Naive thymus-derived CD4-positive, alpha-beta T cell (primary cell): ENCODE measurements at regions of chr19 and their contacts with region 1.

Region 1: DNA sequence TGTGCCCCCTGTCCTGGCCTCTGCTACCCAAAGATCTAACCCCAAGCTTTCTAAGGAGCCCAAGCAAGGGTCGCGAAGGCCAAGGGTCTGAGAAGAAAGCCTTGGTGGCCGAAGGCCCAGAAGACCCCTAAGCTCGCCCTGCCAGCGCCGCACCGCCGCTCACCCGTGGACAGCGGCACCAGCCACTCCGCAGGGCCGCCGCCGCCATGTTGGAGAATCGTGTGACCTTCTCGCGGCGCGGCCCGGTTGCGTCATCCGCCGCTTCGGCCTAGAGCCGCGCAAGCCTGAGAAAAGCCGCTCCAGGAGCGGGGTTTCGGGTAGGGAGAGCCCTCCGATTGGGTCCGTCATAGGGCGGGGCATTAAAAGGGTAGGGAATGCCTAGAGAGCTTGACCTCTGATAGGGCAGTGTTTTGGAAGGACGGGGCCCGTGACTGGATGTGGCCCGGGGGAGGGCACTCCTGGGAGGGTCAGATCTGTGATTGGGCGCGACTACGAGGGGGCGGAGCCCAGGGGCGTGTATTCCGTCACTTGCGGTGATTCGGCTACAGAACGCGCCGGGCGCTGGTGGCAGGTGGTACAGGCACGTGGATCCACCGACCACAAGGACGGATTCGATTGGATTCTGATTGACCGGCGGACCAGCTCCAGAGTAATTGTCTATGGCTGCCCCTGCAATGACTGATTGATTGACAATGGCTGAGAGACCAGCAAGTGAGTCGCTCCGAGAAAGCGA is at the start of gene TIMM44:
- DNase-seq: peak; percentile 91 to 99 (median 98)
- ATAC-seq: peak; percentile 98
- H3K4me3 ChIP-seq: peak within 1 kb of the TSS; percentile 92
- H3K4me3 Mint-ChIP-seq: peak within 1 kb of the TSS; percentile 83 to 99 (median 94)
- H3K27ac ChIP-seq: peak within 1 kb of the TSS; percentile 96
- H3K27ac Mint-ChIP-seq: peak within 1 kb of the TSS; percentile 78 to 98 (median 96)
- H3K4me1 ChIP-seq: peaks cover 7 to 9% of the 10 kb centered on the region in 2 donors
- H3K4me1 Mint-ChIP-seq: peaks cover 10 to 44% (median 28%) of the 10 kb centered on the region in 7 donors
- H3K27me3 ChIP-seq: no peaks in the 10 kb centered on the region
- H3K27me3 Mint-ChIP-seq: no peaks in the 10 kb centered on the region
- total RNA-seq, gene TIMM44: 65.3 to 97.6 (median 73.8) TPM

Region 2: GRCh38 chr19:7629347-7630054 is 314.1 kb before region 1 on chr19 and contains the starts of genes PET100 and XAB2:
- CTCF ChIA-PET with region 1: no interaction called
- POLR2A ChIA-PET with region 1: interaction called, 6 read pairs
- intact Hi-C with region 1: loop called in 1 of 2 experiments (anchors 1 kb)
- DNase-seq: peak; percentile 81 to 97 (median 95)
- ATAC-seq: peak; percentile 97
- H3K4me3 ChIP-seq: peak within 1 kb of the TSS; percentile 89
- H3K4me3 Mint-ChIP-seq: peak within 1 kb of the TSS; percentile 87 to 100 (median 98)
- H3K27ac ChIP-seq: peak within 1 kb of the TSS; percentile 92
- H3K27ac Mint-ChIP-seq: peak within 1 kb of the TSS; percentile 96 to 100 (median 99)
- H3K4me1 ChIP-seq: peaks cover 19 to 21% of the 10 kb centered on the region in 2 donors
- H3K4me1 Mint-ChIP-seq: peaks cover 25 to 57% (median 38%) of the 10 kb centered on the region in 7 donors
- H3K27me3 ChIP-seq: no peaks in the 10 kb centered on the region
- H3K27me3 Mint-ChIP-seq: no peaks in the 10 kb centered on the region
- total RNA-seq, gene PET100: 112 to 134 (median 117) TPM
- total RNA-seq, gene XAB2: 49.3 to 79.8 (median 76.4) TPM

Region 3: DNA sequence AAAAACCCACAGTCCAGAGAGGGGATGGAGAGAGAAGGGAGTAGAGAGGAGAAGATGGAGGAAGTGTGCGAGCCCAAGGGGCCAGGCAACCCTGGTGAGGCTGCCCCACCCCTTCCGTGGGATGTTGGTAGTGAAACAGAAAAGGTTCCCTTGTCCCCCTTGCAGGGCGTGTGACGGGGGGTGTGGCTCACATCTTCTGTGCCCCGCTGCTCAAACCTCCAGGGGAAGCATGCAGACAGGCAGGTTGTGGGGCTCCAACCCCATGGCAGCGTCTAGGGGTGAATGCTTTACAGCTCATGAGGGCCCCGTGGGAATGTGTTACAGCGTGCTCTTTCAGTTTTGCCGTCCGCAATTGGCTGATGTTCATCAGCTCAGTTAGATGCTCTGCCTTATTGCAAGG is 128.3 kb before region 1 on chr19:
- CTCF ChIA-PET with region 1: no interaction called
- POLR2A ChIA-PET with region 1: no interaction called
- intact Hi-C with region 1: no loop called
- DNase-seq: peak in 4 of 9 donors; percentile 26 to 37 (median 30)
- ATAC-seq: peak; percentile 64
- H3K4me3 ChIP-seq: peak overlapping the region; percentile 24
- H3K4me3 Mint-ChIP-seq: peak overlapping the region; percentile 48 to 84 (median 66)
- H3K27ac ChIP-seq: no peak overlapping the region
- H3K27ac Mint-ChIP-seq: peak overlapping the region in 4 of 9 donors; percentile 49 to 91 (median 76)
- H3K4me1 ChIP-seq: peaks cover 9 to 14% of the 10 kb centered on the region in 2 donors
- H3K4me1 Mint-ChIP-seq: peaks cover 3 to 25% (median 20%) of the 10 kb centered on the region in 7 donors
- H3K27me3 ChIP-seq: no peaks in the 10 kb centered on the region
- H3K27me3 Mint-ChIP-seq: peaks cover 6 to 21% (median 17%) of the 10 kb centered on the region in 5 donors

Region 4: GRCh38 chr19:7852851-7853769 is 90.5 kb before region 1 on chr19:
- CTCF ChIA-PET with region 1: interaction called, 3 read pairs
- POLR2A ChIA-PET with region 1: no interaction called
- intact Hi-C with region 1: loop called in 1 of 2 experiments (anchors 1 kb)
- DNase-seq: peak; percentile 38 to 76 (median 51)
- ATAC-seq: peak; percentile 87
- H3K4me3 ChIP-seq: no peak overlapping the region
- H3K4me3 Mint-ChIP-seq: peak overlapping the region in 1 of 10 donors; percentile 33
- H3K27ac ChIP-seq: no peak overlapping the region
- H3K27ac Mint-ChIP-seq: peak overlapping the region in 1 of 9 donors; percentile 52
- H3K4me1 ChIP-seq: peaks cover 3 to 7% of the 10 kb centered on the region in 2 donors
- H3K4me1 Mint-ChIP-seq: peaks cover 0 to 8% (median 5%) of the 10 kb centered on the region in 7 donors
- H3K27me3 ChIP-seq: no peaks in the 10 kb centered on the region
- H3K27me3 Mint-ChIP-seq: no peaks in the 10 kb centered on the region

Region 5: GRCh38 chr19:7919610-7920518 is 23.7 kb before region 1 on chr19 and contains the start of gene SNAPC2:
- CTCF ChIA-PET with region 1: interaction called, 14 read pairs
- POLR2A ChIA-PET with region 1: interaction called, 38 read pairs
- intact Hi-C with region 1: loop called (anchors 1 kb)
- DNase-seq: peak; percentile 95 to 99 (median 98)
- ATAC-seq: peak; percentile 71
- H3K4me3 ChIP-seq: peak within 1 kb of the TSS; percentile 86
- H3K4me3 Mint-ChIP-seq: peak within 1 kb of the TSS; percentile 88 to 97 (median 94)
- H3K27ac ChIP-seq: peak within 1 kb of the TSS; percentile 75
- H3K27ac Mint-ChIP-seq: peak within 1 kb of the TSS; percentile 76 to 97 (median 92)
- H3K4me1 ChIP-seq: peaks cover 25 to 34% of the 10 kb centered on the region in 2 donors
- H3K4me1 Mint-ChIP-seq: peaks cover 15 to 52% (median 38%) of the 10 kb centered on the region in 7 donors
- H3K27me3 ChIP-seq: peaks cover 3 to 20% of the 10 kb centered on the region in 2 donors
- H3K27me3 Mint-ChIP-seq: peaks cover 12 to 33% (median 14%) of the 10 kb centered on the region in 5 donors
- total RNA-seq, gene SNAPC2: 12.3 to 24.4 (median 21.4) TPM

Region 6: GRCh38 chr19:8158411-8159074 is 214.9 kb after region 1 on chr19:
- CTCF ChIA-PET with region 1: no interaction called
- POLR2A ChIA-PET with region 1: no interaction called
- intact Hi-C with region 1: loop called (anchors 1 kb)
- DNase-seq: peak in 8 of 9 donors; percentile 34 to 70 (median 60)
- ATAC-seq: peak; percentile 69
- H3K4me3 ChIP-seq: no peak overlapping the region
- H3K4me3 Mint-ChIP-seq: no peak overlapping the region
- H3K27ac ChIP-seq: no peak overlapping the region
- H3K27ac Mint-ChIP-seq: no peak overlapping the region
- H3K4me1 ChIP-seq: no peaks in the 10 kb centered on the region
- H3K4me1 Mint-ChIP-seq: peaks cover 0 to 12% (median 3%) of the 10 kb centered on the region in 7 donors
- H3K27me3 ChIP-seq: no peaks in the 10 kb centered on the region
- H3K27me3 Mint-ChIP-seq: peaks cover 4 to 27% (median 23%) of the 10 kb centered on the region in 5 donors

Region 7: DNA sequence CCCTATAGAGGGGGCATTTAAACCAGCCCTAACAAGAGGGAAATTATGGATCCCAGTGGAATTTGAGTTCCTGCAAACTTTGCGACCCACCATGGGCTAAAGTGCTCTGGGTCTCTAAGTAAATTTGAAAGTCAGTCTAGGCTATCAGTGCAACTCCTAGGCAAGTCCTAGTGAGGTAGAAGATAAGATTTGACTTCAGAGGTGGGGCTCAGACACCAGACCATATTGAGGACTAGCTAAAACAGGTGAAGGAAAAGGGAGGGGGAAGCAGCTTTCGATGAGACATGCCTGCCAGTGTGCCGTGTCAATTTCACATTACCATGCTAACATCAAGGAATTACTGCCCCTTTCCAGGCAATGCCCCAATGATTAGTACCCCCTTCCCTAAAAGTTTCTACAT is 326.1 kb after region 1 on chr19:
- CTCF ChIA-PET with region 1: no interaction called
- POLR2A ChIA-PET with region 1: no interaction called
- intact Hi-C with region 1: loop called in 1 of 2 experiments (anchors 5 kb)
- DNase-seq: no peak
- ATAC-seq: no peak
- H3K4me3 ChIP-seq: peak overlapping the region; percentile 98
- H3K4me3 Mint-ChIP-seq: peak overlapping the region; percentile 85 to 97 (median 93)
- H3K27ac ChIP-seq: peak overlapping the region; percentile 88
- H3K27ac Mint-ChIP-seq: peak overlapping the region; percentile 66 to 95 (median 93)
- H3K4me1 ChIP-seq: peaks cover 0 to 6% of the 10 kb centered on the region in 2 donors
- H3K4me1 Mint-ChIP-seq: peaks cover 7 to 25% (median 13%) of the 10 kb centered on the region in 7 donors
- H3K27me3 ChIP-seq: no peaks in the 10 kb centered on the region
- H3K27me3 Mint-ChIP-seq: no peaks in the 10 kb centered on the region